Calu3 (cell line): ENCODE measurements at regions of chr9 and their contacts with region 1.

Region 1: GRCh38 chr9:35829084-35829763 is at the start of gene TMEM8B:
- DNase-seq: peak; percentile 88
- H3K4me3 Mint-ChIP-seq: peak within 1 kb of the TSS; percentile 89
- H3K27ac Mint-ChIP-seq: peak within 1 kb of the TSS; percentile 84
- H3K4me1 Mint-ChIP-seq: peaks cover 16% of the 10 kb centered on the region
- H3K27me3 Mint-ChIP-seq: peaks cover 13% of the 10 kb centered on the region
- CTCF ChIP-seq: no peak
- total RNA-seq, gene TMEM8B: 2.5 and 3.7 TPM in 2 replicates

Region 2: DNA sequence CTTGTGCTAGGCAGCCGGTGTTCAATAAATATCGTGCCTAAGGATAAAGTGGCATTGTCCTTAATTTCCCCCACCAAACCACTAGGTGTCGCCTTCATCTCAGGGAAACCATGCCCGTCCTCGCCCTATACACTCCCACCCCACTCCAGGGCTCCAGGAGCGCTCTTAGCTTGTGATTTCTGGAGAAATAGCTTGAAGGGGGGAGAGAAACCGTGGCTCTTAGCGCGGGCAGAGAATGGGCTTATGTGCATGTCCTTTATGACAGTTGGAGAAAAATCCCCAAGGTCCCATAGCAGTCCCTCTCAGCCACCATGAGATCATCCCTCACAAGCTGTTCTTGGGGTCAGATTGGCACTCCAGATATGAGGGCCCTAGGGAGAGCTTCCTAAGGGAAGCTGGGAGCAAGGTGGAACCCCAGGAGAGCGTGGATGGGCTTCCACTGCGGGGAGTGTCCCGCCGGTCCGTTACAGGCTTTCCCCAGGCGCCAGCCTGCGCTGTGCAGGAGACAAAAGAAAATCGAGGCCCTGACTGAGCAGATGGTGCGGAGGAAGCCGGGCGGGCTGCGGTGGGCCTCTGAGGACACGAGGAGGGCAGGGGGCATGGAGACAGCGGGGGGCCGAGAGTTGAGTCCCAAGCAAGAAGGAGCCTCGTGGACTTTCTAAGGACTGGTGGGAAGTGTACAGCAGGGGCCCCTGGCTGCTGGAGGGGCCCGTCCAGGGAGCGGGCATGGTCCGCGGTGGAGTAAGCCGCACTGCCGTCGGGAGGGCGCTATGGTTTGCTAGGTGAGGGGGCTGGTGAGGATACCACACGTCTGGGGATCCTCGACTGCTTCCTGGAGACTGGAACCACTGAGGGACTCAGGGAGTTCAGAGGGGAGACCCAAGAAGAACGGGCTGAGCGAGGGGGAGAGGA is 38.6 kb before region 1 on chr9:
- CTCF ChIA-PET with region 1: interaction called, 5 read pairs
- intact Hi-C with region 1: loop called (anchors 1 kb)
- DNase-seq: peak; percentile 48
- H3K4me3 Mint-ChIP-seq: no peak overlapping the region
- H3K27ac Mint-ChIP-seq: no peak overlapping the region
- H3K4me1 Mint-ChIP-seq: peaks cover 14% of the 10 kb centered on the region
- H3K27me3 Mint-ChIP-seq: no peaks in the 10 kb centered on the region
- CTCF ChIP-seq: no peak

Region 3: DNA sequence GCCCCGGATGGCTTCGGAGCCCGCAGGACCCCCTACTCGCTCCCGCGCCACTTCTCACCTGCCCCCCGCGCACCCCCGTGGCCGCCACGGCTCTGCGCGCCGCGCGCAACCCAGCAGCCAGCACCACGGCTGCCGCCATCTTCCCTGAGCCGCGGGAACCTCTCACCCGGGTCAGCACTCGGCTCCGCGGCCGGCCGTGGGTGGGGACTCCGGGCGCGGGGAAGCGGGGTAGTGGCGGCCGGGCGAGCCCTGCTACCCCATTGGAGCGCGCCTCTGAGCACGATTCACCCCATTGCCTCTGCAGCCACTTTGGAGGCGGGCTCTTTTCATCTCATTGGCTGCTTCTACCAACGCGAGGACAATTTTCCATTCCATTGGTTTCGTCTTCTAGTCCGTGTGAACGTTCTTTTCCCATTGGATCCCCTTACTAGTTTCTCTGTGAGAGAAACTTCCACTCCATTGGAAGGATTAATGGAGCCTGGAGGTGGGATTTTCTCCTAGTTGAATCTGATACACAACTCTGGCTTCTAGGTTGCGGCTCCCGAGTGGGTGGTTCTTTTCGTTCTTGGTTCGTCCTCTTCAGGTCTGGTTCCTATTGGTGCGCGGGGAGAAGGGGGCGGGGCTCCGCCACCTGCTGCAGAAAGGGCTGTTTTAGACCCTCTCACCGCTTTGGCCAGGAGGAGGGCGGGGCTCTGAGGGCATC is 14.2 kb before region 1 on chr9 and contains the start of gene HINT2:
- CTCF ChIA-PET with region 1: interaction called, 3 read pairs
- intact Hi-C with region 1: loop called (anchors 2 kb)
- DNase-seq: peak; percentile 95
- H3K4me3 Mint-ChIP-seq: peak within 1 kb of the TSS; percentile 75
- H3K27ac Mint-ChIP-seq: peak within 1 kb of the TSS; percentile 67
- H3K4me1 Mint-ChIP-seq: peaks cover 8% of the 10 kb centered on the region
- H3K27me3 Mint-ChIP-seq: peaks cover 21% of the 10 kb centered on the region
- CTCF ChIP-seq: no peak
- total RNA-seq, gene HINT2: 33.9 and 39.7 TPM in 2 replicates

Region 4: GRCh38 chr9:35882263-35882848 is 53.1 kb after region 1 on chr9:
- CTCF ChIA-PET with region 1: interaction called, 23 read pairs
- intact Hi-C with region 1: loop called (anchors 1 kb)
- DNase-seq: peak; percentile 83
- H3K4me3 Mint-ChIP-seq: no peak overlapping the region
- H3K27ac Mint-ChIP-seq: no peak overlapping the region
- H3K4me1 Mint-ChIP-seq: no peaks in the 10 kb centered on the region
- H3K27me3 Mint-ChIP-seq: peaks cover 10% of the 10 kb centered on the region
- CTCF ChIP-seq: peak; percentile 71